ENCODE measurements at regions of chr18 and their contacts with region 1.

Region 1: GRCh38 chr18:2655178-2655953 is at the start of gene SMCHD1:
- DNase-seq: peak; percentile 73 to 96 (median 87)
- ATAC-seq: peak; percentile 67
- H3K4me3 ChIP-seq: peak within 1 kb of the TSS; percentile 97
- H3K4me3 Mint-ChIP-seq: peak within 1 kb of the TSS; percentile 97
- H3K27ac ChIP-seq: peak within 1 kb of the TSS; percentile 99
- H3K27ac Mint-ChIP-seq: peak within 1 kb of the TSS; percentile 89
- H3K4me1 ChIP-seq: peaks cover 25% of the 10 kb centered on the region
- H3K4me1 Mint-ChIP-seq: peaks cover 55% of the 10 kb centered on the region
- H3K27me3 ChIP-seq: no peaks in the 10 kb centered on the region
- H3K27me3 Mint-ChIP-seq: no peaks in the 10 kb centered on the region
- CTCF ChIP-seq: no peak
- total RNA-seq, gene SMCHD1: 357 to 359 TPM

Region 2: GRCh38 chr18:2571200-2572143 is 83.9 kb before region 1 on chr18 and contains the starts of genes METTL4 and NDC80:
- CTCF ChIA-PET with region 1: interaction called, 9 read pairs
- POLR2A ChIA-PET with region 1: interaction called, 187 read pairs
- intact Hi-C with region 1: loop called (anchors 1 kb)
- DNase-seq: peak; percentile 71 to 94 (median 78)
- ATAC-seq: peak; percentile 81
- H3K4me3 ChIP-seq: peak within 1 kb of the TSS; percentile 90
- H3K4me3 Mint-ChIP-seq: peak within 1 kb of the TSS; percentile 100
- H3K27ac ChIP-seq: peak within 1 kb of the TSS; percentile 90 to 99
- H3K27ac Mint-ChIP-seq: peak within 1 kb of the TSS; percentile 99
- H3K4me1 ChIP-seq: peaks cover 27% of the 10 kb centered on the region
- H3K4me1 Mint-ChIP-seq: peaks cover 70% of the 10 kb centered on the region
- H3K27me3 ChIP-seq: no peaks in the 10 kb centered on the region
- H3K27me3 Mint-ChIP-seq: no peaks in the 10 kb centered on the region
- CTCF ChIP-seq: no peak
- total RNA-seq, gene METTL4: 6.5 to 10.4 TPM
- total RNA-seq, gene NDC80: 6.3 to 7.5 TPM

Region 3: DNA sequence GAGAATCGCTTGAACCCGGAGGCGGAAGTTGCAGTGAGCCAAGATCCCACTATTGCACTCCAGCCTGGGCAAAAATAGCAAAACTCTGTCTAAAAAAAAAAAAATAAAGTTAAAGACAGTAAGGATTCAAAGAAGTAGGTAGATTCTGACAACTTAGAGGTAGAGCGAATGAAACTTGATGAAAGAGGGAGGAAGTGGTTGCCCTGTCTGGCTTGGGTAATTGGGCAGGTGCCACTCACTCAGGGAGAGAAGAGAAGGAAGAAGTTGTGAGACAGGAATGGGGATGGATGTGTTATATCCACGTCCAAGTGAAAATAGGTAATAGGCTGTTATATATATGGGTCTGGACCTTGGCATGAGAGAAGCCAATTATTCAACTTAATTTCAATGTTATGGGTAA is 57.7 kb before region 1 on chr18:
- CTCF ChIA-PET with region 1: no interaction called
- POLR2A ChIA-PET with region 1: interaction called, 18 read pairs
- intact Hi-C with region 1: loop called in 1 of 2 experiments (anchors 2 kb)
- DNase-seq: peak in 7 of 14 experiments; percentile 9 to 75 (median 35)
- ATAC-seq: peak; percentile 88
- H3K4me3 ChIP-seq: no peak overlapping the region
- H3K4me3 Mint-ChIP-seq: peak overlapping the region; percentile 2
- H3K27ac ChIP-seq: no peak overlapping the region
- H3K27ac Mint-ChIP-seq: peak overlapping the region; percentile 34
- H3K4me1 ChIP-seq: peaks cover 7% of the 10 kb centered on the region
- H3K4me1 Mint-ChIP-seq: peaks cover 55% of the 10 kb centered on the region
- H3K27me3 ChIP-seq: no peaks in the 10 kb centered on the region
- H3K27me3 Mint-ChIP-seq: no peaks in the 10 kb centered on the region
- CTCF ChIP-seq: no peak

Region 4: DNA sequence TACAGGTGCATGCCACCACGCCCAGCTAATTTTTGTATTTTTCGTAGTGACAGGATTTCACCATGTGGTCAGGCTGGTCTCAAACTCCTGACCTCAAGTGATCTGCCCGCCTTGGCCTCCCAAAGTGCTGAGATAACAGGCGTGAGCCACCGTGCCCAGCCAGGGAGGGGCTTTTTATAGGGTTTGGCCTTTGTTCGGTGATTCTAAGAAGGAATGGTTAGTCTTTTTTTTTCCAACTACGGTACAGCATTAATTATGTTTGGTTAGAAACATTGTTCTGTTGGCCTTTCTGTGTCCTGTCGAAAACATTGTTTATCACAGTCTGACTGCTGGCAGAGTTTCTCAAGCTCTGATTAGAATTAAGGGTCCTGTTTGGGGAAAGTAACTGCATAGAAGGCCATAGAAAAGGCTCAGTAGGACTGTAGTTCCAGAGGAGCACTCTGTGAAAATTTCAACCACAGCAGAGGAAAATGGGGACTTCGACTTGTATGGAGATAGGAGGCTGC is 19.2 kb before region 1 on chr18:
- CTCF ChIA-PET with region 1: interaction called, 32 read pairs
- POLR2A ChIA-PET with region 1: interaction called, 698 read pairs
- intact Hi-C with region 1: loop called (anchors 1 kb)
- DNase-seq: no peak
- ATAC-seq: peak; percentile 46
- H3K4me3 ChIP-seq: peak overlapping the region; percentile 44
- H3K4me3 Mint-ChIP-seq: peak overlapping the region; percentile 80
- H3K27ac ChIP-seq: peak overlapping the region; percentile 91 to 97
- H3K27ac Mint-ChIP-seq: no peak overlapping the region
- H3K4me1 ChIP-seq: peaks cover 79% of the 10 kb centered on the region
- H3K4me1 Mint-ChIP-seq: peaks cover 99% of the 10 kb centered on the region
- H3K27me3 ChIP-seq: no peaks in the 10 kb centered on the region
- H3K27me3 Mint-ChIP-seq: no peaks in the 10 kb centered on the region
- CTCF ChIP-seq: no peak

Region 5: DNA sequence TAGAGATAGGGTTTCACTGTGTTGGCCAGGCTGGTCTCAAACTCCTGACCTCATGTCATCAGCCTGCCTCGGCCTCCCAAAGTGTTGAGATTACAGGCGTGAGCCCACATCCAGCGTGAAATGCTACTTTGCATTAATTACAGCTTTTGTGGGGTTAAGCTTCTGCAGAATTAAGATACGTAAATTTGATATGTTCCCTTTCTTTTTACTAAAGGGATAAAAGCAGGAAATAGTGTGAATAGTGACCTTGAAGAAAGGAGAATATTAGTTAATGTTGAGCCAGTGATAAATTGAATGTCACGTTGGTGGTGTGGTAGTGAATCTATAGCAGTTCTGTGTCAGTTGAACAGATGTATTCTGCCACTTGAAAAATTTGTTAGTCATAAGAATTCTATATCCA is 17.0 kb after region 1 on chr18:
- CTCF ChIA-PET with region 1: interaction called, 3 read pairs
- POLR2A ChIA-PET with region 1: interaction called, 29 read pairs
- intact Hi-C with region 1: no loop called
- DNase-seq: no peak
- ATAC-seq: no peak
- H3K4me3 ChIP-seq: no peak overlapping the region
- H3K4me3 Mint-ChIP-seq: no peak overlapping the region
- H3K27ac ChIP-seq: no peak overlapping the region
- H3K27ac Mint-ChIP-seq: no peak overlapping the region
- H3K4me1 ChIP-seq: peaks cover 6% of the 10 kb centered on the region
- H3K4me1 Mint-ChIP-seq: peaks cover 81% of the 10 kb centered on the region
- H3K27me3 ChIP-seq: no peaks in the 10 kb centered on the region
- H3K27me3 Mint-ChIP-seq: no peaks in the 10 kb centered on the region
- CTCF ChIP-seq: no peak

Region 6: DNA sequence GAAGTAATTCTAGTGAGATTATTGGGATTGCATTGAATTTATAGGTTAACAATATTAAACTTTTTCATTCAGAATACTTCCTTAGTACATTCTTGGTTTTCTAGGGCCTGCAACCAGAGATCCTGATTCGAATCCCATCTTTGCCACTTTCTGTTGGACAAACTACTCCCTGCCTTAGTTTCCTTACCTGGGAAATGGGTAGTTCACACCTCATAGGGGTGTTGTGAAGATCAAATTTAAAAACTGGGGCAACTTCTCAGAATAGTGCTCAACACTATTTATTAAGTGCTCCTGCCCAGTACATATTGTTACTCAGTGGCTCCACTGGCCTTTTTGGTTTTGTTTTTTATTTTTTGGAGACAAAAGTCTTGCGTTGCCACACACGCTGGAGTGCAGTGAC is 43.6 kb after region 1 on chr18:
- CTCF ChIA-PET with region 1: interaction called, 3 read pairs
- POLR2A ChIA-PET with region 1: interaction called, 12 read pairs
- intact Hi-C with region 1: loop called (anchors 5 kb)
- DNase-seq: no peak
- ATAC-seq: no peak
- H3K4me3 ChIP-seq: no peak overlapping the region
- H3K4me3 Mint-ChIP-seq: no peak overlapping the region
- H3K27ac ChIP-seq: no peak overlapping the region
- H3K27ac Mint-ChIP-seq: peak overlapping the region; percentile 17
- H3K4me1 ChIP-seq: peaks cover 4% of the 10 kb centered on the region
- H3K4me1 Mint-ChIP-seq: peaks cover 53% of the 10 kb centered on the region
- H3K27me3 ChIP-seq: no peaks in the 10 kb centered on the region
- H3K27me3 Mint-ChIP-seq: no peaks in the 10 kb centered on the region
- CTCF ChIP-seq: no peak

Region 7: DNA sequence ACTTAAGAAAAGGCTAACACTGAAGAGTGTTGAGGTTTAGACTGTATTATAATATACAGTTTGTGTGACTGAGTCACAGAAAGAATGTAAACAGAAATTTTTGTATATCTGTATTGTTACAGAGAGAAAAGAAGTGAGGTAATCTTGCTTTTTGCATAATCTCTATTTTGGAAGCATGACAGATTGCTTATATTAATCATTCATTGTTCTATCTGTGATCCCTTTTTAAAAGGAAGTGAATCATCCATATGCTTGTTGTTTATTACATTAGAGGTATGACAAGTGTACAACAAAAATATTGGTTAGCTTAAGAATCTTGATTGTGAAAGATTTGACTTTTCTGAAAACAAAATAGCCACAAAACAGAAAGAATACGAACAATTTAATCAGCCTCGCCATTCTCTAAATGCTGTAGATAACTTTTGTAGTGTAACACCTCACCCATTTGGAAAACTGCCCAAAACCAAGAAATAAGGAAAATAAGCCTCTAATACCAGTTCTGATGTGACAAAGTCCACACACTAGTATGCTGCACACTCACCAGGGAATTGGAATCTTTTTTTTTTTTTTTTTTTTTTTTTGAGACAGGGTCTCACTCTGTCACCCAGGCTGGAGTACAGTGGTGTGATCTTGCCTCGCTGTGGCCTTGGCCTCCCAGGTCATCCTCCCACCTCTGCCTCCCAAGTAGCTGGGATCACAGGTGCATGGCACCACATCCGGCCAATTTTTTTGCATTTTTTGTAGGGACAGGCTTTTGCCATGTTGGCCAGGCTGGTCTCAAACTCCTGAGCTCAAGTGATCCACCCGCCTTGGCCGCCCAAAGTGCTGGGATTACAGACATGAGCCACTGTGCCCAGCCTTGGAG is 449.1 kb after region 1 on chr18:
- CTCF ChIA-PET with region 1: no interaction called
- POLR2A ChIA-PET with region 1: no interaction called
- intact Hi-C with region 1: no loop called
- DNase-seq: no peak
- ATAC-seq: no peak
- H3K4me3 ChIP-seq: no peak overlapping the region
- H3K4me3 Mint-ChIP-seq: no peak overlapping the region
- H3K27ac ChIP-seq: no peak overlapping the region
- H3K27ac Mint-ChIP-seq: no peak overlapping the region
- H3K4me1 ChIP-seq: no peaks in the 10 kb centered on the region
- H3K4me1 Mint-ChIP-seq: peaks cover 3% of the 10 kb centered on the region
- H3K27me3 ChIP-seq: no peaks in the 10 kb centered on the region
- H3K27me3 Mint-ChIP-seq: no peaks in the 10 kb centered on the region
- CTCF ChIP-seq: no peak

Region 8: DNA sequence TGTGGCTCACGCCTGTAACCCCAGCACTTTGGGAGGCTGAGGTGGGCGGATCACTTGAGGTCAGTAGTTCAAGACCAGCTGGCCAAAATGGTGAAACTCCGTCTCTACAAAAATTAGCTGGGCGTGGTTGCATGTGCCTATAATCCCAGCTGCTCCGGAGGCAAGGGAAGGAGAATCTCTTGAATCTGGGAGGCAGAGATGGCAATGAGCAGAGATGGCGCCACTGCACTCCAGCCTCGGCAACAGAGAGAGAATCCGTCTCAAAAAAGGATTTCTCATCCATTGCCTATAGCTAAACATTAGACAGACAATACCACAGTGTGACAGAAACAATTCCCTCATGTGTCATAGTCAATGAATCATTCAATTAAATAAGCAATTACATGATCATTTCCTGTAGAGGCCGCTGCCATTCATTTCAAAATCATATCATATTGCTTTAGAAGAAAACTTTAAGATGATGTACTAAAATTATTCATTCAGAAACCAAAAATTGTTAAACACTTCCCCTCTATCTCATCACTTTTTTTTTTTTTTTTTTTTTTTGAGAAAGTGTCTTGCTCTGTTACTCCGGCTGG is 725.1 kb after region 1 on chr18:
- CTCF ChIA-PET with region 1: no interaction called
- POLR2A ChIA-PET with region 1: no interaction called
- intact Hi-C with region 1: no loop called
- DNase-seq: peak in 3 of 14 experiments; percentile 52 to 62 (median 54)
- ATAC-seq: peak; percentile 51
- H3K4me3 ChIP-seq: no peak overlapping the region
- H3K4me3 Mint-ChIP-seq: no peak overlapping the region
- H3K27ac ChIP-seq: no peak overlapping the region
- H3K27ac Mint-ChIP-seq: no peak overlapping the region
- H3K4me1 ChIP-seq: no peaks in the 10 kb centered on the region
- H3K4me1 Mint-ChIP-seq: no peaks in the 10 kb centered on the region
- H3K27me3 ChIP-seq: no peaks in the 10 kb centered on the region
- H3K27me3 Mint-ChIP-seq: no peaks in the 10 kb centered on the region
- CTCF ChIP-seq: no peak